Vagina (tissue), 2 donors: ENCODE measurements at regions of chr3 and their contacts with region 1.

Region 1: DNA sequence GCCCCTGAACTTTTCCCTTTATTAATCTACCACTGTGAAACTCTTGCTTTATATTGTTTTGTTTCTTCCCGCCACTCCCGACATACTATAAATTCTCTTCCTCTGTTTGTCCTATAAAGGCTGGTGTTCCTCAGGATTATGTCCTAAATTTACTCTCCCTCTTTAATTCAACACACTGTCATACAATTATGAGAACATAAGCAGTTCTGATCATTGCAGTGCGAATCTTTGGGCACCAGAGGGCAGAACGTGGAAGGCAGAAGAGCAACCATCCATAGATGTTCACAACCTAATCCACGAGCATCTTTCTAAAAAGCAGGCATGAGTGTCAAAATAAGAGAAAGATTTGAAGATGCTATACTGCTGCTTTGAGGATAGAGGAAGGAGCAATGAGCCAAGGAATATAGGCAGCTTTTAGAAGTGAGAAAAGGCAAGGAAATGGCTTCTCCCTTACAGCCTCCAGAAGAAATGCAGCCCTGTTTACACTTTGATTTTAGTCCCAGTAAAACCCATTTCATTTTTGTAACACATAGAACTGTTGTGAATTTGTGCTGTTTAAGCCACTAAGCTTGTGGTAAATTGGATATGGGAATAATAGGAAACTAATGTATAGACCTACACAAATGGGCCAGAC is 179.4 kb downstream of the GBE1 start:
- DNase-seq: no peak
- H3K4me3 ChIP-seq: no peak overlapping the region
- H3K27ac ChIP-seq: no peak overlapping the region
- H3K4me1 ChIP-seq: no peaks in the 10 kb centered on the region
- H3K27me3 ChIP-seq: no peaks in the 10 kb centered on the region
- CTCF ChIP-seq: peak in 1 of 3 experiments; percentile 26
- POLR2A ChIP-seq: no peak

Region 2: GRCh38 chr3:81549831-81550230 is 32.3 kb before region 1 on chr3:
- intact Hi-C with region 1: loop called (anchors 1 kb)
- DNase-seq: no peak
- H3K4me3 ChIP-seq: no peak overlapping the region
- H3K27ac ChIP-seq: no peak overlapping the region
- H3K4me1 ChIP-seq: peaks cover 7% of the 10 kb centered on the region
- H3K27me3 ChIP-seq: no peaks in the 10 kb centered on the region
- CTCF ChIP-seq: no peak
- POLR2A ChIP-seq: no peak

Region 3: DNA sequence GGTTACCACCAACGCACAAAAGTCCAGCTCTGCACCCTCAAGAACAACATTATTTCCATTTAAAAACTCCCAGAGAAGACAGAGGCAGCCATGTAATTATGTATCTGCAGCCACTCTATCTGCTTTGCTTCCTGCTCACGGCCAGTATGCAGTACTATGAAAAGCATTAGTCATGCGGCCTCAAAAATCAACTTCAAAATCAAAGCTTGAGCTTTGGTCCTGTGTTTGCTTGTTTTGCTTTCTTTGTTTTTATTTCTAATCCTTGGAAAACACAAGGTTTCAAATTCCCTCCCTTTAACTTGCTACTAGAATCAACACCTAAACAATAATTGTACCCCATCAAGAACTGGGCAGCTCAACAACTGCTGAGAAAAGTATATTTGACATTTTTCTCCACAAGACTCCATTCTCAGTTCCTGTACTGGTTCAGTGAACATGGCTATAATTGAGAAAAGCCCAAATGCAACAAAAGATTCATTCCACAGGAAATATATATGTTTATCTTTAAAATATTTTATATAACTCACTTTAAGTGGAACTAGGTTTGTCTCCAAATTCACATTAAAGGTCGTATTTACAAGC is 141.7 kb after region 1 on chr3:
- intact Hi-C with region 1: no loop called
- DNase-seq: no peak
- H3K4me3 ChIP-seq: no peak overlapping the region
- H3K27ac ChIP-seq: no peak overlapping the region
- H3K4me1 ChIP-seq: peaks cover 35% of the 10 kb centered on the region
- H3K27me3 ChIP-seq: no peaks in the 10 kb centered on the region
- CTCF ChIP-seq: no peak
- POLR2A ChIP-seq: no peak

Region 4: DNA sequence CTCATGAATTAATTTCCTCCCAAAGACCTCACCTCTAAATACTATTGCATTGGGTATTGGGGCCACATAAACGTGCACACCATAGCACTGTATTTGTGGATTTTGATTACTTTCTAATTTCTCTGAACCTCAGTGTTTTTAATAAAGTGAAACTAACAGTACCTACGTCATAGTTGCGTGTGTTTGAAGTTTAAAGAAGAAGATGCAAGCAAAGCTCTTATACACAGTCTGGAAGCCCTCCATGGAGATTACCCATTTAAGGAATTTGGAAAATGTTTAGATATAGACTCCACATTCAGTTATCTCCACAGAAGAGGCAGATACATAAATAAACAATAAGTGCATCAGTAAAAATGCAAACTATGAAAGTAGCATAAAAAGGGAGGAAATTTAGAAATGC is 760.4 kb after region 1 on chr3:
- intact Hi-C with region 1: no loop called
- DNase-seq: no peak
- H3K4me3 ChIP-seq: no peak overlapping the region
- H3K27ac ChIP-seq: no peak overlapping the region
- H3K4me1 ChIP-seq: no peaks in the 10 kb centered on the region
- H3K27me3 ChIP-seq: no peaks in the 10 kb centered on the region
- CTCF ChIP-seq: no peak
- POLR2A ChIP-seq: no peak